ENCODE measurements at regions of chr10 and their contacts with region 1.

Region 1: DNA sequence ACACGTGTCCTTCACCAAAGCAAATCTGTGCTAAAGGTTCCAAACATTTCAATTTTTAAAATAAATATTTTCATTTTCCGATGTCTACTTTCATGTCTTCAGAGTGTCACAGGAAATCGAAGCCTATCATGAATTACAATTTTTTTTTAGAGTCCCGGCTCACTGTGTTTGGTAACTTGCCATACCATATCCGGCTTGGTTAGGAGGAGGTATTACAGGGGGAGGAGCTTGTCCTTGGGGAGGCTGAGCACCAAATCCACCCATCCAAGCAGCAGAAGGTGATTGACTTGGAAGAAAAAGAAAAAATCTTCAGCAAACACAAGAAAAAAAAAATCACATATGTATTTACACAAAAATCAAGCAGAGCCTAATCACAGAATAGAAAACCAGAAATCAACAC is 21.3 kb downstream of the TIAL1 start:
- DNase-seq: peak; percentile 25
- H3K4me3 Mint-ChIP-seq: no peak overlapping the region
- H3K27ac Mint-ChIP-seq: peak overlapping the region; percentile 73
- H3K4me1 Mint-ChIP-seq: peaks cover 20% of the 10 kb centered on the region
- H3K27me3 Mint-ChIP-seq: no peaks in the 10 kb centered on the region

Region 2: GRCh38 chr10:119401671-119402395 is 173.7 kb before region 1 on chr10:
- CTCF ChIA-PET with region 1: no interaction called
- POLR2A ChIA-PET with region 1: no interaction called
- intact Hi-C with region 1: no loop called
- DNase-seq: no peak
- H3K4me3 Mint-ChIP-seq: no peak overlapping the region
- H3K27ac Mint-ChIP-seq: no peak overlapping the region
- H3K4me1 Mint-ChIP-seq: peaks cover 8% of the 10 kb centered on the region
- H3K27me3 Mint-ChIP-seq: no peaks in the 10 kb centered on the region

Region 3: GRCh38 chr10:119480667-119481066 is 94.8 kb before region 1 on chr10:
- CTCF ChIA-PET with region 1: no interaction called
- POLR2A ChIA-PET with region 1: no interaction called
- intact Hi-C with region 1: no loop called
- DNase-seq: no peak
- H3K4me3 Mint-ChIP-seq: no peak overlapping the region
- H3K27ac Mint-ChIP-seq: no peak overlapping the region
- H3K4me1 Mint-ChIP-seq: peaks cover 33% of the 10 kb centered on the region
- H3K27me3 Mint-ChIP-seq: no peaks in the 10 kb centered on the region

Region 4: GRCh38 chr10:119562097-119562496 is 13.4 kb before region 1 on chr10:
- CTCF ChIA-PET with region 1: no interaction called
- POLR2A ChIA-PET with region 1: no interaction called
- intact Hi-C with region 1: loop called (anchors 1 kb)
- DNase-seq: no peak
- H3K4me3 Mint-ChIP-seq: no peak overlapping the region
- H3K27ac Mint-ChIP-seq: no peak overlapping the region
- H3K4me1 Mint-ChIP-seq: no peaks in the 10 kb centered on the region
- H3K27me3 Mint-ChIP-seq: no peaks in the 10 kb centered on the region

Measured in activated CD4-positive, alpha-beta memory T cell treated with anti-CD3 and anti-CD28 coated beads for 36 hours (primary cell).